CD4-positive, alpha-beta T cell (primary cell): ENCODE measurements at regions of chr18 and their contacts with region 1.

Region 1: GRCh38 chr18:46173393-46174341 is 69.5 kb downstream of the HAUS1 start:
- DNase-seq: peak; percentile 88 to 96 (median 91)
- ATAC-seq: peak; percentile 91
- H3K4me3 ChIP-seq: peak overlapping the region; percentile 93
- H3K4me3 Mint-ChIP-seq: peak overlapping the region; percentile 99
- H3K27ac ChIP-seq: peak overlapping the region; percentile 64 to 70
- H3K27ac Mint-ChIP-seq: peak overlapping the region; percentile 91
- H3K4me1 ChIP-seq: peaks cover 39% of the 10 kb centered on the region
- H3K4me1 Mint-ChIP-seq: peaks cover 44% of the 10 kb centered on the region
- H3K27me3 ChIP-seq: no peaks in the 10 kb centered on the region
- H3K27me3 Mint-ChIP-seq: no peaks in the 10 kb centered on the region
- CTCF ChIP-seq: peak; percentile 99

Region 2: GRCh38 chr18:46104128-46104911 is 69.3 kb before region 1 on chr18 and contains the start of gene HAUS1:
- CTCF ChIA-PET with region 1: interaction called, 9 read pairs
- POLR2A ChIA-PET with region 1: no interaction called
- intact Hi-C with region 1: loop called in 1 of 2 experiments (anchors 2 kb)
- DNase-seq: peak; percentile 58 to 89 (median 78)
- ATAC-seq: peak; percentile 96
- H3K4me3 ChIP-seq: peak within 1 kb of the TSS; percentile 80
- H3K4me3 Mint-ChIP-seq: peak within 1 kb of the TSS; percentile 98
- H3K27ac ChIP-seq: peak within 1 kb of the TSS in 1 of 2 donors; percentile 23
- H3K27ac Mint-ChIP-seq: peak within 1 kb of the TSS; percentile 95
- H3K4me1 ChIP-seq: peaks cover 20% of the 10 kb centered on the region
- H3K4me1 Mint-ChIP-seq: peaks cover 47% of the 10 kb centered on the region
- H3K27me3 ChIP-seq: no peaks in the 10 kb centered on the region
- H3K27me3 Mint-ChIP-seq: no peaks in the 10 kb centered on the region
- CTCF ChIP-seq: no peak
- total RNA-seq, gene HAUS1: 8.8 to 10.8 TPM

Region 3: DNA sequence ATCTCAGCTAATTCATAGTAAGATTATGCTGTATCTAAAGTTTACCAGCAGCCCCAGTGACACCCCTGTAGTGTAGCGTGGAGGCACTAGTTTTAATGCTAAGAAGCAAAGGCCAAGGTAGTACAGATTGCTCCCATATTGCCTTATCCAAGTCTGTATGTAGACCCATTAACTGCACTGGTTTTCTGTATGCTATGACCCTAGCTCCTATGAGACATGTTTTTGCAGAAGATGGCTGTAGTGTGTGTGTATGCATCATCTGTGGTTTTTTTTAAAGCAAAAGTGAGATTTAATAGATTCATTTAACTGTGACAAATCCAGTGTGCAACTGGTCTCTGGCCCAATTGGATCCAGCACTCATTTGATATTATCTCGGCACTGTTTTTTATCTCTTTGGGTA is 17.0 kb after region 1 on chr18:
- CTCF ChIA-PET with region 1: interaction called, 15 read pairs
- POLR2A ChIA-PET with region 1: interaction called, 6 read pairs
- intact Hi-C with region 1: no loop called
- DNase-seq: no peak
- ATAC-seq: no peak
- H3K4me3 ChIP-seq: no peak overlapping the region
- H3K4me3 Mint-ChIP-seq: peak overlapping the region; percentile 34
- H3K27ac ChIP-seq: no peak overlapping the region
- H3K27ac Mint-ChIP-seq: peak overlapping the region; percentile 44
- H3K4me1 ChIP-seq: peaks cover 23% of the 10 kb centered on the region
- H3K4me1 Mint-ChIP-seq: peaks cover 31% of the 10 kb centered on the region
- H3K27me3 ChIP-seq: no peaks in the 10 kb centered on the region
- H3K27me3 Mint-ChIP-seq: no peaks in the 10 kb centered on the region
- CTCF ChIP-seq: no peak

Region 4: GRCh38 chr18:46213295-46213694 is 39.6 kb after region 1 on chr18:
- CTCF ChIA-PET with region 1: interaction called, 48 read pairs
- POLR2A ChIA-PET with region 1: interaction called, 3 read pairs
- intact Hi-C with region 1: loop called (anchors 1 to 2 kb)
- DNase-seq: peak in 3 of 14 experiments; percentile 57 to 58 (median 57)
- ATAC-seq: peak; percentile 62
- H3K4me3 ChIP-seq: no peak overlapping the region
- H3K4me3 Mint-ChIP-seq: peak overlapping the region; percentile 5
- H3K27ac ChIP-seq: no peak overlapping the region
- H3K27ac Mint-ChIP-seq: peak overlapping the region; percentile 34
- H3K4me1 ChIP-seq: peaks cover 25% of the 10 kb centered on the region
- H3K4me1 Mint-ChIP-seq: peaks cover 88% of the 10 kb centered on the region
- H3K27me3 ChIP-seq: no peaks in the 10 kb centered on the region
- H3K27me3 Mint-ChIP-seq: no peaks in the 10 kb centered on the region
- CTCF ChIP-seq: peak; percentile 75

Region 5: GRCh38 chr18:46481048-46481846 is 307.6 kb after region 1 on chr18:
- CTCF ChIA-PET with region 1: no interaction called
- POLR2A ChIA-PET with region 1: no interaction called
- intact Hi-C with region 1: loop called in 1 of 2 experiments (anchors 2 kb)
- DNase-seq: peak; percentile 24 to 68 (median 48)
- ATAC-seq: peak; percentile 61
- H3K4me3 ChIP-seq: no peak overlapping the region
- H3K4me3 Mint-ChIP-seq: no peak overlapping the region
- H3K27ac ChIP-seq: no peak overlapping the region
- H3K27ac Mint-ChIP-seq: no peak overlapping the region
- H3K4me1 ChIP-seq: no peaks in the 10 kb centered on the region
- H3K4me1 Mint-ChIP-seq: no peaks in the 10 kb centered on the region
- H3K27me3 ChIP-seq: peaks cover 0 to 5% of the 10 kb centered on the region in 2 experiments
- H3K27me3 Mint-ChIP-seq: peaks cover 22% of the 10 kb centered on the region
- CTCF ChIP-seq: peak; percentile 65